ENCODE measurements at regions of chr16 and their contacts with region 1.

Region 1: GRCh38 chr16:22077700-22078313 is 14.5 kb upstream of the VWA3A start:
- DNase-seq: peak; percentile 69
- H3K4me3 Mint-ChIP-seq: no peak overlapping the region
- H3K27ac Mint-ChIP-seq: no peak overlapping the region
- H3K4me1 Mint-ChIP-seq: no peaks in the 10 kb centered on the region
- H3K27me3 Mint-ChIP-seq: no peaks in the 10 kb centered on the region
- CTCF ChIP-seq: peak; percentile 81

Region 2: DNA sequence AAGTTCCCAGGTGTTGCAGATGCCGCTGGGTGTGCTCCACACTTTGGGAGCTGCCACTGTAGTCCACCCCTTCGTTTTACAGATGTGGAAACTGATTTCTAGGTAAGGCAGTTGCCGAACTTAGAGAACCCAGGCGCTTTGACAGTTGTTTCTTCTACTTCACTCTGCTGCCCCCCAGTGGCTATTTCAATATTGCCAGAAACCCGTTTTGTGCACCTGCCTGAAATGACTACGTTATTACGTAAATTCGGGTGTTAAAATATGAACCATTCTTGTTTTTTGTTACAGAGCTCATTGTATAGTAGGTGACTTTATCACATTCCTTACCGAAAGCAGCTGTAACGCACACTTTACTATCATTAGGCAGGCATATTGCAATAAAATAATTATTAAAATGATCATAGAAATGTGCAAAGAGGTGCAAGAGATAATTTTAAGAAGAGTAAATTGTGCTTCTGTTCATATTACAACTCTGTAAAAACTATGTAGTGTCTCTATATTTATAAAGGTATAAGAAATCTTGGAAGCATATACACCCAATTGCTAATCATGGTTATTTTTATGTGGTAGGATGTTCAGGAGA is 369.2 kb before region 1 on chr16:
- CTCF ChIA-PET with region 1: no interaction called
- POLR2A ChIA-PET with region 1: no interaction called
- intact Hi-C with region 1: no loop called
- DNase-seq: peak; percentile 76
- H3K4me3 Mint-ChIP-seq: no peak overlapping the region
- H3K27ac Mint-ChIP-seq: no peak overlapping the region
- H3K4me1 Mint-ChIP-seq: peaks cover 2% of the 10 kb centered on the region
- H3K27me3 Mint-ChIP-seq: no peaks in the 10 kb centered on the region
- CTCF ChIP-seq: peak; percentile 69

Region 3: GRCh38 chr16:21971856-21972255 is 106.0 kb before region 1 on chr16:
- CTCF ChIA-PET with region 1: interaction called, 10 read pairs
- POLR2A ChIA-PET with region 1: no interaction called
- intact Hi-C with region 1: no loop called
- DNase-seq: no peak
- H3K4me3 Mint-ChIP-seq: no peak overlapping the region
- H3K27ac Mint-ChIP-seq: peak overlapping the region; percentile 20
- H3K4me1 Mint-ChIP-seq: peaks cover 5% of the 10 kb centered on the region
- H3K27me3 Mint-ChIP-seq: no peaks in the 10 kb centered on the region
- CTCF ChIP-seq: no peak

Region 4: DNA sequence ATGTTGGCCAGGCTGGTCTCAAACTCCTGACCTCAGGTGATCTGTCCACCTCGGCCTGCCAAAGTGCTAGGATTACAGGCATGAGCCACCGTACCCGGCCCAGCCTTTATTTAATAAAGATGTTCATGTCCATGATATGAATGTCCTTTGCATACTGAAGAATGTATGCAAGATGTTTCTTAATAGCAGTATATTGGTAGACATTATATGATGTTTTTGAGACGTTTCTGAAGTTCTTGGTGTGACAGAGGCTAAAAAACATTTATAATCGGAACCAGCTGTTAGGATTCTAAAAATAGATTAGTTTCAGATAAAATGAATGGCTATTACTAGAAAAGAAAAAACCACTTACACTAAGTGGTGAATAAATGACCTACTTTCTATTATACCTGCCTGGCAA is 88.7 kb before region 1 on chr16:
- CTCF ChIA-PET with region 1: interaction called, 502 read pairs
- POLR2A ChIA-PET with region 1: interaction called, 3 read pairs
- intact Hi-C with region 1: no loop called
- DNase-seq: no peak
- H3K4me3 Mint-ChIP-seq: no peak overlapping the region
- H3K27ac Mint-ChIP-seq: no peak overlapping the region
- H3K4me1 Mint-ChIP-seq: no peaks in the 10 kb centered on the region
- H3K27me3 Mint-ChIP-seq: no peaks in the 10 kb centered on the region
- CTCF ChIP-seq: no peak

Region 5: GRCh38 chr16:22007509-22008214 is 70.1 kb before region 1 on chr16 and contains the start of gene MOSMO:
- CTCF ChIA-PET with region 1: interaction called, 502 read pairs
- POLR2A ChIA-PET with region 1: interaction called, 78 read pairs
- intact Hi-C with region 1: no loop called
- DNase-seq: peak; percentile 74
- H3K4me3 Mint-ChIP-seq: peak within 1 kb of the TSS; percentile 90
- H3K27ac Mint-ChIP-seq: peak within 1 kb of the TSS; percentile 70
- H3K4me1 Mint-ChIP-seq: peaks cover 26% of the 10 kb centered on the region
- H3K27me3 Mint-ChIP-seq: no peaks in the 10 kb centered on the region
- CTCF ChIP-seq: no peak
- total RNA-seq, gene MOSMO: 16.4 and 17.1 TPM in 2 replicates

Region 6: GRCh38 chr16:22023505-22023904 is 54.3 kb before region 1 on chr16:
- CTCF ChIA-PET with region 1: interaction called, 32 read pairs
- POLR2A ChIA-PET with region 1: interaction called, 13 read pairs
- intact Hi-C with region 1: no loop called
- DNase-seq: no peak
- H3K4me3 Mint-ChIP-seq: no peak overlapping the region
- H3K27ac Mint-ChIP-seq: peak overlapping the region; percentile 35
- H3K4me1 Mint-ChIP-seq: peaks cover 40% of the 10 kb centered on the region
- H3K27me3 Mint-ChIP-seq: no peaks in the 10 kb centered on the region
- CTCF ChIP-seq: no peak

Region 7: GRCh38 chr16:22063888-22064467 is 13.8 kb before region 1 on chr16:
- CTCF ChIA-PET with region 1: interaction called, 30 read pairs
- POLR2A ChIA-PET with region 1: interaction called, 7 read pairs
- intact Hi-C with region 1: no loop called
- DNase-seq: no peak
- H3K4me3 Mint-ChIP-seq: no peak overlapping the region
- H3K27ac Mint-ChIP-seq: no peak overlapping the region
- H3K4me1 Mint-ChIP-seq: peaks cover 23% of the 10 kb centered on the region
- H3K27me3 Mint-ChIP-seq: no peaks in the 10 kb centered on the region
- CTCF ChIP-seq: no peak

Region 8: GRCh38 chr16:22098405-22099255 is 20.8 kb after region 1 on chr16:
- CTCF ChIA-PET with region 1: interaction called, 63 read pairs
- POLR2A ChIA-PET with region 1: interaction called, 3 read pairs
- intact Hi-C with region 1: no loop called
- DNase-seq: peak; percentile 61
- H3K4me3 Mint-ChIP-seq: peak overlapping the region; percentile 49
- H3K27ac Mint-ChIP-seq: no peak overlapping the region
- H3K4me1 Mint-ChIP-seq: no peaks in the 10 kb centered on the region
- H3K27me3 Mint-ChIP-seq: peaks cover 21% of the 10 kb centered on the region
- CTCF ChIP-seq: peak; percentile 60

Measured in MCF 10A (cell line).